Activated naive CD4-positive, alpha-beta T cell treated with anti-CD3 and anti-CD28 coated beads for 36 hours (primary cell): ENCODE measurements at regions of chr6 and their contacts with region 1.

Region 1: GRCh38 chr6:5866547-5867101 is 140.1 kb downstream of the NRN1 start:
- DNase-seq: peak; percentile 43
- H3K4me3 Mint-ChIP-seq: peak overlapping the region; percentile 64
- H3K27ac Mint-ChIP-seq: peak overlapping the region; percentile 76
- H3K4me1 Mint-ChIP-seq: peaks cover 47% of the 10 kb centered on the region
- H3K27me3 Mint-ChIP-seq: no peaks in the 10 kb centered on the region

Region 2: DNA sequence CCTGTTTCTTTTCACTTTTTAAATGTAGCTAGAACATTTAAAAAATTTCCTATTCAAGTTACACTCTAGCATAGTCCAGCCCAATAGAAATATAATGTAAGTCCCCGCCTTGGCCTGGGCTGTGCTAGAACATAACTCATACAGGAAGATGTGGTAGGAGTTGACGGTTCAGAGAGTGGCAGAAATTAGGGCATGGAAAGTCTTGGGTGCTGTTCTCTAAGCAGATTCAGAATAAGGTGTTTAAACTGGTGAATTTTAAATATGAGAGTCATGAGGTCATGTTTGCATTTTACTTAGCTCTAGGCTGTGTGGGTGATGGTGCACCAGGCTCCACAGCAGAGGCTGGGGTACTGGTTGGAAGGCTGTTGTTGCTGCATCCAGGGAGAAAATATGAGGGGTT is 348.8 kb before region 1 on chr6:
- CTCF ChIA-PET with region 1: no interaction called
- intact Hi-C with region 1: loop called (anchors 5 kb)
- DNase-seq: peak; percentile 72
- H3K4me3 Mint-ChIP-seq: no peak overlapping the region
- H3K27ac Mint-ChIP-seq: peak overlapping the region; percentile 53
- H3K4me1 Mint-ChIP-seq: peaks cover 60% of the 10 kb centered on the region
- H3K27me3 Mint-ChIP-seq: no peaks in the 10 kb centered on the region

Region 3: DNA sequence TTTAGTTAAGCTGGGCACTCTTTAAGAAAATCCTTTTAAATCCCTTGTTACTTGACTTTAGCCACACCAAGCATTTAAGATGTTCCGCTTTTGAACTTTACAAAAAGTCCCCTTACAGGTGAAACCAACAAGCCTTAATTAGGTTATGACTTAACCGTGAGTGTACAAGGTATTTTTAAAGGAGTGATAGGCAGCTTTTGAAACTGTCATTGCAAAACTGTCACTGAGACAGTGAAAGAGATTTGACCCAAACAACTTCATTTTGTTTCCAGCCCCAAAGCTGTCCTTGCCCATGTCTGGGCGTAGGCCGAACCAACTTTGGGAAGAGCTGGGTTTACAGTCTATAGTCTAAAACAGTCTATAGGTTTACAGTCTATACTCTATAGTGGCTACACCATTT is 299.9 kb before region 1 on chr6:
- CTCF ChIA-PET with region 1: no interaction called
- intact Hi-C with region 1: loop called (anchors 5 kb)
- DNase-seq: no peak
- H3K4me3 Mint-ChIP-seq: no peak overlapping the region
- H3K27ac Mint-ChIP-seq: no peak overlapping the region
- H3K4me1 Mint-ChIP-seq: peaks cover 32% of the 10 kb centered on the region
- H3K27me3 Mint-ChIP-seq: no peaks in the 10 kb centered on the region

Region 4: DNA sequence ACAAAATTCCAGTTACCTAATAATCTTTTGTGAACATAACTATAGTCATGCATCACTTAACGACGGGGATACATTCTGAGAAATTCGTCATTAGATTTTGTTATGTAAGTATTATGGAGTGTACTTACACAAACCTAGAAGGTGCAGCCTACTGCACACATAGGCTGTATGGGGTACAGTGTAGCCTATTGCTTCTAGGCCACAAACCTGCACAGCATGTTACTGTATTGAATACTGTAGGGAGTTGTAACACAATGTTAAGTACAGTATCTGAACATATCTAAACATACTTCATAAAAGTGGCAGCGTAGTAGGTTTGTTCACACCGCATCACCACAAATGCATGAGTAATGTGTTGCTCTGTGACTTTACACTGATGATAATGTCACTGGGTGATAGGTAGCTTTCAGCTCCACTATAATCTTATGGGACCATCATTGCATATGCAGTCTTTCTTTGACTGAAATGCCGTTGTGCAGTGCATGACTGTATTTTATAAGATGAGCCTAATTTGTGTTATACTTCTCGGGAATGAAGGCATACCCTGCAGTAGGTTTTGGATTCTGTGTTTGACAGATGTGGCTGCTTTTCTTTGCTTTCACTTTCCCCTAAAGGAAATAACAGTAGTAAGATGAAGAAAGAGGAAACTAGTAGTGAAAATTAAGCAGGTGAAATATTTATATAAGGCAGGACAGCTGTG is 239.7 kb before region 1 on chr6:
- CTCF ChIA-PET with region 1: no interaction called
- intact Hi-C with region 1: loop called (anchors 5 kb)
- DNase-seq: peak; percentile 54
- H3K4me3 Mint-ChIP-seq: peak overlapping the region; percentile 2
- H3K27ac Mint-ChIP-seq: no peak overlapping the region
- H3K4me1 Mint-ChIP-seq: peaks cover 50% of the 10 kb centered on the region
- H3K27me3 Mint-ChIP-seq: no peaks in the 10 kb centered on the region

Region 5: DNA sequence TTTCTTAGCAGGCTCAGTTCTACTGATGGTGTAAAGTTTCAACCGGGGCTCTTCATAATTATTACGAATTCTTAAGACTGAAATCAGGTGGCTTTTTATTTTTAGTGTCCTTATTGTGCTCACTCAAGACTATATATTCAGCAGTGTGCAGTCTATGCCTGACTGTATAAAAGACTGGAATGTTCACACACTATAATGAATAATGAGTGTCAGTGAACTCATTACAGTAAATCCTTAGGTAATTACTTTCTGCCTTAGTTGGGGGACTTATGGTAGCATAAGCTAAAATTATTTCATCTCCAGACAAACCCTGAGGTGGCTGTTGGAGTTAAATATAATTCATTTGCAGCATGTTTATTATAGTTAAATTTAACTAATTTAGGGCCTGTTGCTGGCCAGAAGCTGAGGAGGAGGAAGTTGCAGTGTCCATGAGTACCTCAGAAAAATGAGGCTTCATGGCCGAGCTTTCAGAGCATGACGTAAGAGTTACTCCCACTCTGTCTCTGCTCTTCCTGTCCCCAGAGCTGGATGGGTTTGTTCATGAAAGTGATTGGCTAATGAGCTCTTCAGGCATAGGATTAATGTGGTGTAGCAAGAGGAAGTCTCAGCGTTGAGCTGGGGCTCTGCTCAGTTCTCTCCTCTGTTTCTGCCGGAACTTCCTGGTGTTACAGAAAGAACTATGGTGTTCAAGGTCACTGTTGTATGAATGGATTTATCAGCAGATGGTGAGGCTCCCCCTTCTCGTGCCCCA is 195.6 kb before region 1 on chr6:
- CTCF ChIA-PET with region 1: no interaction called
- intact Hi-C with region 1: loop called (anchors 1 kb)
- DNase-seq: peak; percentile 51
- H3K4me3 Mint-ChIP-seq: peak overlapping the region; percentile 41
- H3K27ac Mint-ChIP-seq: peak overlapping the region; percentile 70
- H3K4me1 Mint-ChIP-seq: peaks cover 56% of the 10 kb centered on the region
- H3K27me3 Mint-ChIP-seq: no peaks in the 10 kb centered on the region

Region 6: DNA sequence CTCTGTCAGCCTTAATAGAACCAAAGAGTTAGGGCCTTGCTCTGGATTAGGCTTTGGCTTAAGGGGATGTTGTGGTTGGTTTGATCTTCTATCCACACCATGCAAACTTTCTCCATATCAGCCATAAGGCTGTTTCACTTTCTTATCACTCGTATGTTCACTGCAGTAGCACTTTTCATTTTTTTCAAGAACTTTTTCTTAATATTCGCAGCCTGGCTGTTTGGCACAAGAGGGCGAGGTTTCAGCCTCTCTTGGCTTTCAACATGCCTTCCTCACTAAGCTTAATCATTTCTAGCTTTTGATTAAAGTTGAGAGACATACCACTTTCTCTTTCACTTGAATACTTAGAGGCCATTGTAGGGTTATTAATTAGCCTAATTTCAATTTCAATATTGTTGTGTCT is 53.0 kb before region 1 on chr6:
- CTCF ChIA-PET with region 1: no interaction called
- intact Hi-C with region 1: loop called (anchors 5 kb)
- DNase-seq: peak; percentile 36
- H3K4me3 Mint-ChIP-seq: no peak overlapping the region
- H3K27ac Mint-ChIP-seq: no peak overlapping the region
- H3K4me1 Mint-ChIP-seq: peaks cover 29% of the 10 kb centered on the region
- H3K27me3 Mint-ChIP-seq: no peaks in the 10 kb centered on the region

Region 7: GRCh38 chr6:5851261-5851757 is 15.3 kb before region 1 on chr6:
- CTCF ChIA-PET with region 1: no interaction called
- intact Hi-C with region 1: loop called (anchors 2 kb)
- DNase-seq: peak; percentile 86
- H3K4me3 Mint-ChIP-seq: peak overlapping the region; percentile 74
- H3K27ac Mint-ChIP-seq: peak overlapping the region; percentile 47
- H3K4me1 Mint-ChIP-seq: no peaks in the 10 kb centered on the region
- H3K27me3 Mint-ChIP-seq: peaks cover 2% of the 10 kb centered on the region